ENCODE measurements at regions of chr5 and their contacts with region 1.

Region 1: GRCh38 chr5:42767491-42768105 is 11.0 kb downstream of the CCDC152 start:
- DNase-seq: no peak
- H3K4me3 ChIP-seq: no peak overlapping the region
- H3K27ac ChIP-seq: no peak overlapping the region
- H3K4me1 ChIP-seq: no peaks in the 10 kb centered on the region
- H3K27me3 ChIP-seq: no peaks in the 10 kb centered on the region
- CTCF ChIP-seq: peak; percentile 32

Region 2: DNA sequence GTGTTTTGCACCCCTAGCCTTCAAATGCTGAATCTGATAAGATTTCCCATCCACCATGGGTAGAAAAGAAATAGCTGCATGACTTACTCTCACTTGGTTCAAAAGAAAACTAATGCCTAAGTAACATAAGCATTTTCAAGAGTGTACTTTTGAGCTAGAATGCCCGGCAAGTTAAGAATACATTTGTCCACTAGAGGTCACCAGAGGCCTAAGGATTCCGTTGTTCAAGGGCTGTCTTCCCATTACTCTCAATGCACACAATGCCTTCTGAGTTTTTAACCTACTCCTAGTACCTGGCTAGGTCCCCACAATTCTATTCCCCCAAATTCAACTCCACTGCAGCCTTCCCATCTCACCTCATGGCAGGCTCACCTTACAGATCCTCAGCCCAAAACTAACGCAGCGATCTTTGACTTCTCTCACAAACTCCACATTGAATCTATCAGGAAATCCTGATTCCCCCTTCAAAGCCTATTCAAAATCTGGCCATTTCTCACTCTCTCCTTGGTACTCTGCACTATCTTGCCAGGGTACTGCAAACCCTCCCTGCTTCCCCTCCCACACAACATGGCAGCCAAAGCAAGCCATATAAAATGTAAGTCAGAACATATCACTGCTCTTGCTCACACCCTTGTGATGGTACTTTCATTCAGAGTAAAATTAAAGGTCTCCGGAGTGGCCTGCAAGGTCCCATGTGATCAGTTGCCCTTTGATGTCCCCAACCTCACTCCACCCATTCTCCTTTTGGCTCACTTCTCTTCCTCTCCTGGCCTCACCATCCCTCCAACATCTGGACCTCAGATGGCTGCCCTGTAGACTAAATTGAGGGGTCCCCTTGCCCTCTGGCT is 910.7 kb before region 1 on chr5:
- intact Hi-C with region 1: loop called (anchors 10 kb)
- DNase-seq: peak; percentile 56
- H3K4me3 ChIP-seq: no peak overlapping the region
- H3K27ac ChIP-seq: no peak overlapping the region
- H3K4me1 ChIP-seq: no peaks in the 10 kb centered on the region
- H3K27me3 ChIP-seq: no peaks in the 10 kb centered on the region
- CTCF ChIP-seq: peak; percentile 72

Region 3: GRCh38 chr5:42005561-42006153 is 761.9 kb before region 1 on chr5:
- intact Hi-C with region 1: loop called (anchors 10 kb)
- DNase-seq: no peak
- H3K4me3 ChIP-seq: no peak overlapping the region
- H3K27ac ChIP-seq: no peak overlapping the region
- H3K4me1 ChIP-seq: no peaks in the 10 kb centered on the region
- H3K27me3 ChIP-seq: no peaks in the 10 kb centered on the region
- CTCF ChIP-seq: peak; percentile 57

Region 4: DNA sequence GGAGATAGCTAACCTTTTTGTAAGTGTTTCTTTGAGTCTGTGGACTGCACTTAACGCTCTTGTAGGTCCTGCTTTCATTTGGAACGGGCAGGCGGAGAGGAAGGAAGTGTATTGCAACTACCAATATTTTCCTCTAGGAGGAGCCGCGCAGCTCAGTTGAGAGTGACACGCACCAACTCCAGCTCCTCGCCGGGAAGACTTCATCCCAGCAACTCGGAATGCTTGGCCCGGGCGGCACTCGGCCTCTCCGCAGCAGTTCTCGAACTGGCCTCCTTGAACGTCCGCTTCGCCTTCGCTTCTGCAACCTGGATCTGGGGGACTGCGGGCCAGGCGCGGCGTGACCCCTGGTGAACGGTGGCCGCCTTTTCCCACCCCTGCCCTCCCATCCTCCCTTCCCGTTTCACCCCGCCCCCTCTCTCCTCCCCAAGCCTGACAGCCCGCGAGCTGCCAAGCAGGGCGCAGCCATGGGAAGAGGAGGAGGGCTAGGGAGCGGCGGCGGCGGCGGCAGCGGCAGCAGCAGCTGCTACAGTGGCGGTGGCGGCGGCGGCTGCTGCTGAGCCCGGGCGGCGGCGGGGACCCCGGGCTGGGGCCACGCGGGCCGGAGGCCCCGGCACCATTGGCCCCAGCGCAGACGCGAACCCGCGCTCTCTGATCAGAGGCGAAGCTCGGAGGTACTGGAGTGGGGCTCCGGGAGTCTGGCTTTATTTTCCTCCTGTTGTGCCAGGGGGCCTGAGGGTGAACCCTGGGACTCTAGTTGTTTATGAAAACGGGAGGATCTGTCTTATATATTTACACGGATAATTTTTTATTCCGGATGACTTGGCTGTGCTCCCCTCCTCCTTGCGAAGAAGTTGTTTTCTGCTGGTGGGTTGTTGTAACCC is 344.1 kb before region 1 on chr5 and contains the start of gene GHR:
- intact Hi-C with region 1: loop called (anchors 10 kb)
- DNase-seq: peak; percentile 83
- H3K4me3 ChIP-seq: peak within 1 kb of the TSS; percentile 58
- H3K27ac ChIP-seq: peak within 1 kb of the TSS; percentile 74
- H3K4me1 ChIP-seq: no peaks in the 10 kb centered on the region
- H3K27me3 ChIP-seq: no peaks in the 10 kb centered on the region
- CTCF ChIP-seq: peak; percentile 61
- total RNA-seq, gene GHR: 2.4 to 6.8 TPM

Region 5: DNA sequence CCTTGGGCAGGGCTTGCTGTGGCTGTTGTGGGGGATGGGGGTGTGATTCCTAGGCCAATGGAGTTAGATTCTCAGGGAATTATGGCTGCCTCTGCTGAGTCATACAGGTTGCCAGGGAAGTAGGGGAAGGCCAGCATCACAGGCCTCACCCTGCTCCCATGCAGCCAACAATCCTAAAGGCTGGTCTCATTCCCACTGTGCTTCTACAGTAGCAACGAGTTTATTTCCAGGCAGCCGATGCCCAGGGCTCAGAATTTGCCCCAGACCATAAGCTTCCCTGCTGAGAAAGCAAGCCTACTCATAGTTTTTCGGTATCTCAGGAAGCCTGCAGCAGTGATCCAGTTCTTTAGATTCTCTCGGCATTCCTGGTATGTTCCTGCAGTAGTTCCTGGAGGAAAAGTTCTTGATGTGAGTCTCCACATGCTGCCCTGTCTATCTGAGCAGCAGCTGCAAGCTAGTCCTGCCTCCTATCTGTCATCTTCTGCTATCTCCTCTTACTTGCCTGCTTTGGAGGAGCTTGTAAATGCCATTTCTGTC is 103.4 kb after region 1 on chr5:
- intact Hi-C with region 1: no loop called
- DNase-seq: peak; percentile 52
- H3K4me3 ChIP-seq: no peak overlapping the region
- H3K27ac ChIP-seq: no peak overlapping the region
- H3K4me1 ChIP-seq: no peaks in the 10 kb centered on the region
- H3K27me3 ChIP-seq: no peaks in the 10 kb centered on the region
- CTCF ChIP-seq: no peak

Region 6: DNA sequence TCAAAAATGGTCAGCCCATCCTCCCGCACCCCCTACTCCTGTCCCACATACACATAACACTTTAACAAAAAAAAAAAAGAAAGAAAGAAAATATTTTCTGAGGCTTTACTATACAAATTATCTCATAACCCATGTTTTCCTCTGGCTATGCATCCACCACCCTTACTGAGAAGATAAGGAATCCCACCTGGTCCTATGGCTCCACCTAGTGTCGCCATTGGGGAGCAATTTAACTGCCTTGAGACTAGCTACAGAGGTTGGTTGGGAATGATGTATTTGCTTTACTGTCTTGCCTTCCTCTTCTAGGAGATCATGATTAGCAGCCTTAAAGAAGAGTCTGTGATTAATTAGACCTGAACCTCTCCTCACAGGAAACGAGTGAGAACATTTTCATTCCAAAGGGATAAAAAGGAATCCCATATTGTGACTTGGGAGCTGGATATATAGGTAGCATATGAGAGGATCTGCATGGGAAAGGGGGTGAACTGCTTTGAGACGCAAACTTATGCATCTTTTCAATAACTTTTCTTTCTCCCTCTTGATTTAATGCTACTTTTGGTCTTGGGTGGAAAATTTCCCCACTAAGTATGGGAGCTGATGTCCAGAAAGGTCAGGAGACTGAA is 121.8 kb after region 1 on chr5:
- intact Hi-C with region 1: loop called (anchors 5 kb)
- DNase-seq: peak; percentile 91
- H3K4me3 ChIP-seq: no peak overlapping the region
- H3K27ac ChIP-seq: no peak overlapping the region
- H3K4me1 ChIP-seq: no peaks in the 10 kb centered on the region
- H3K27me3 ChIP-seq: no peaks in the 10 kb centered on the region
- CTCF ChIP-seq: peak; percentile 94